B cell (primary cell): ENCODE measurements at regions of chr18 and their contacts with region 1.

Region 1: DNA sequence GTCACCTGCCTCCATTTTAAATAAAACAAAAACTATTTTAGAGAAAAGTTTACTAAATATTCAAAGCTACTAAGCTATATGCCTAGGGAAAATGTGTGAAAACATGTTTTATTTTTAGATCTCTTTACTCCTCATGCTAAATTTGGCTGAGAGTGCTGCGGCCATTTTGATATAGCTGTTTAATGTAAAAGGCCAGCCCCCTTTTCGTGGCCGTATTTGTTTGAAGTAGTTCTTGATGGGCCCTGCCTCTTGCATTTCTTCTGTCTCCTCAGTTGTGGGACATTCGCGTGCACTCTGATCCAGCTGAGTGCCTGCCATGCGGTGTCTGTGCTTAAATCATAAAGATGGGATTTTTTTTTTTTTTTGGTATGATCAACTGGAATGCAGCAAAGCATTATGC is 64.0 kb downstream of the ZNF407 start:
- DNase-seq: no peak
- ATAC-seq: no peak
- H3K4me3 ChIP-seq: no peak overlapping the region
- H3K4me3 Mint-ChIP-seq: no peak overlapping the region
- H3K27ac ChIP-seq: no peak overlapping the region
- H3K27ac Mint-ChIP-seq: no peak overlapping the region
- H3K4me1 ChIP-seq: no peaks in the 10 kb centered on the region
- H3K4me1 Mint-ChIP-seq: no peaks in the 10 kb centered on the region
- H3K27me3 ChIP-seq: no peaks in the 10 kb centered on the region
- H3K27me3 Mint-ChIP-seq: no peaks in the 10 kb centered on the region
- CTCF ChIP-seq: no peak

Region 2: GRCh38 chr18:73959352-73959751 is 702.3 kb before region 1 on chr18:
- CTCF ChIA-PET with region 1: no interaction called
- POLR2A ChIA-PET with region 1: no interaction called
- intact Hi-C with region 1: no loop called
- DNase-seq: no peak
- ATAC-seq: no peak
- H3K4me3 ChIP-seq: no peak overlapping the region
- H3K4me3 Mint-ChIP-seq: no peak overlapping the region
- H3K27ac ChIP-seq: no peak overlapping the region
- H3K27ac Mint-ChIP-seq: no peak overlapping the region
- H3K4me1 ChIP-seq: peaks cover 17 to 24% of the 10 kb centered on the region in 2 donors
- H3K4me1 Mint-ChIP-seq: peaks cover 31% of the 10 kb centered on the region
- H3K27me3 ChIP-seq: no peaks in the 10 kb centered on the region
- H3K27me3 Mint-ChIP-seq: peaks cover 8% of the 10 kb centered on the region
- CTCF ChIP-seq: no peak

Region 3: GRCh38 chr18:74631623-74632283 is 29.9 kb before region 1 on chr18:
- CTCF ChIA-PET with region 1: no interaction called
- POLR2A ChIA-PET with region 1: no interaction called
- intact Hi-C with region 1: loop called (anchors 1 kb)
- DNase-seq: no peak
- ATAC-seq: no peak
- H3K4me3 ChIP-seq: no peak overlapping the region
- H3K4me3 Mint-ChIP-seq: no peak overlapping the region
- H3K27ac ChIP-seq: no peak overlapping the region
- H3K27ac Mint-ChIP-seq: peak overlapping the region; percentile 29
- H3K4me1 ChIP-seq: no peaks in the 10 kb centered on the region
- H3K4me1 Mint-ChIP-seq: peaks cover 12% of the 10 kb centered on the region
- H3K27me3 ChIP-seq: no peaks in the 10 kb centered on the region
- H3K27me3 Mint-ChIP-seq: no peaks in the 10 kb centered on the region
- CTCF ChIP-seq: no peak